CD4-positive, alpha-beta memory T cell (primary cell): ENCODE measurements at regions of chr14 and their contacts with region 1.

Region 1: DNA sequence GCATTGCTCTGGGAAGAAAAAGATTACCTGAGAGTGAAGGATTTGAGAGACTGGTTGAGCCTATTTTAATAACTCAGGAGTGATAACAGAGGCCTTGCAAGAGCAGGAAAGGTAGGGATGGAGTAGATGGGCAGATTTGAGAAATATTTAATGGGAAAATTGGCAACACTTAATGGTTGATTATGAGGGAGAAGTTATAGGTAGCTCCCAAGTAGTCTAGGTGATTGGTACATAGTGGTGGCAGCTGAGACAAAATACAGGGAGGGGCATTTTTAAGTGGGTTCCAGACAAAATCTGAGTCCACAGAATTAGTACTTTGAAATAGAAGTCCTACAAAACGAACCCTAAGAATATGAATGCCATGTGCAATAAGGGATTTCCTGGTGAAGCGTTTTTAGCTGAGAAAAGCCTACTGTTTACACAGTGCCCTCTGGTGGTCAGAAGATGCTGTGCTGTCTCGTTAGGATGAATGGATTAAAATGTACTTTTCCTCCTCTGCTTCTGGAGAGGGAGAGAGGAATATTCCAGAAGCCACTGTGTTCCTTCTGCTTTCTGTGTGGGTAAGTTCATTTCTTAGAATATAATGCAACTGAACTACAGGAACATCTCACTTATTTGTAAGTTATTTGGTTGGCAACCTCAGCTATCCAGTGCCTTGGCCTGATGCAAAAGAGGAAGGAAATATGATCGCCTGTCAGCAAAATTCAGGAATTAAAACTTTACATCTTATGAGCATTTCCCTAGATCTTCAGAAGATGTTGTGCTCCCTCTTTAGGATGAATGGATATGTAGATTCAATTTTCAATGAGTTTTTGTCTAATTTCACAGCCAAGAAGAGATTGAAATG is 6.5 kb downstream of the ZBTB1 start:
- DNase-seq: peak; percentile 65 to 72 (median 69)
- H3K4me3 ChIP-seq: no peak overlapping the region
- H3K4me3 Mint-ChIP-seq: peak overlapping the region in 7 of 8 donors; percentile 12 to 93 (median 65)
- H3K27ac ChIP-seq: peak overlapping the region; percentile 59
- H3K27ac Mint-ChIP-seq: peak overlapping the region; percentile 54 to 94 (median 88)
- H3K4me1 ChIP-seq: peaks cover 92% of the 10 kb centered on the region
- H3K4me1 Mint-ChIP-seq: peaks cover 62 to 93% (median 81%) of the 10 kb centered on the region in 4 donors
- H3K27me3 ChIP-seq: no peaks in the 10 kb centered on the region
- H3K27me3 Mint-ChIP-seq: no peaks in the 10 kb centered on the region

Region 2: DNA sequence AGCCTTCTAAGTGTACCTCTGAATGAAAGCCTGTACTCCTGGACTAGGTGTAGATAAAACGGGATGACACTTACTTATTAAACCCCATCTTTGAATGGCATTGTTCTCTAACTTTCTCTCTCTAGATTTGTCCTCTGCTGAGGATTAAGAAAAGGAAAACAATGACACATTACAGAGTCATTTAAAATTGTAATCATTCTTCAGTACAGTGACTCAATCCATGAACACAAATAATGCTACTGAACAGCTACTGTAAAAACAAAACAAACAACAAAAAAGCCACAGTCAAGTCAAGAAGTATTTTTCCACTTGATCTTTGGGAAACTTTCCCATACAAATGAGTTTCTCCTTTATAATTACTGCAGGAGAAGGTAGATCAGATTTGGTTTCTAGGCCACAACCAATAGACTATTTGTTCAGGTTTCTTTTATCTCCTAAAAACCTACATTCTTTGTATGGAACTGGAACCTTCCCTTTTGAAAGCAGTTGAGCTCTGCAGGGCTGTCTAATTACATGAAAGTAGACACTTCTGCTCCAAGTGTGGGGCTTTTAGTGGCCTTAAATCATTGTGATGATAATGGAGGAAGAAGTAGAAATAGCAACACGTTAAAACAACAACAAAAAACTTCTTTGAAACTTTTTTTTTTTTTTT is 436.0 kb before region 1 on chr14:
- CTCF ChIA-PET with region 1: no interaction called
- POLR2A ChIA-PET with region 1: no interaction called
- intact Hi-C with region 1: no loop called
- DNase-seq: no peak
- H3K4me3 ChIP-seq: no peak overlapping the region
- H3K4me3 Mint-ChIP-seq: no peak overlapping the region
- H3K27ac ChIP-seq: no peak overlapping the region
- H3K27ac Mint-ChIP-seq: peak overlapping the region in 3 of 7 donors; percentile 8 to 73 (median 58)
- H3K4me1 ChIP-seq: no peaks in the 10 kb centered on the region
- H3K4me1 Mint-ChIP-seq: no peaks in the 10 kb centered on the region
- H3K27me3 ChIP-seq: no peaks in the 10 kb centered on the region
- H3K27me3 Mint-ChIP-seq: no peaks in the 10 kb centered on the region

Region 3: GRCh38 chr14:64338616-64339316 is 172.3 kb before region 1 on chr14:
- CTCF ChIA-PET with region 1: interaction called, 11 read pairs
- POLR2A ChIA-PET with region 1: interaction called, 44 read pairs
- intact Hi-C with region 1: no loop called
- DNase-seq: peak; percentile 84 to 91 (median 85)
- H3K4me3 ChIP-seq: peak overlapping the region; percentile 36 to 77
- H3K4me3 Mint-ChIP-seq: peak overlapping the region; percentile 93 to 99 (median 95)
- H3K27ac ChIP-seq: peak overlapping the region; percentile 34
- H3K27ac Mint-ChIP-seq: peak overlapping the region; percentile 83 to 97 (median 95)
- H3K4me1 ChIP-seq: peaks cover 17% of the 10 kb centered on the region
- H3K4me1 Mint-ChIP-seq: peaks cover 12 to 27% (median 21%) of the 10 kb centered on the region in 4 donors
- H3K27me3 ChIP-seq: no peaks in the 10 kb centered on the region
- H3K27me3 Mint-ChIP-seq: no peaks in the 10 kb centered on the region

Region 4: GRCh38 chr14:64438181-64438841 is 72.7 kb before region 1 on chr14:
- CTCF ChIA-PET with region 1: interaction called, 109 read pairs
- POLR2A ChIA-PET with region 1: no interaction called
- intact Hi-C with region 1: no loop called
- DNase-seq: no peak
- H3K4me3 ChIP-seq: no peak overlapping the region
- H3K4me3 Mint-ChIP-seq: no peak overlapping the region
- H3K27ac ChIP-seq: no peak overlapping the region
- H3K27ac Mint-ChIP-seq: peak overlapping the region in 1 of 7 donors; percentile 50
- H3K4me1 ChIP-seq: no peaks in the 10 kb centered on the region
- H3K4me1 Mint-ChIP-seq: peaks cover 7 to 14% (median 12%) of the 10 kb centered on the region in 4 donors
- H3K27me3 ChIP-seq: no peaks in the 10 kb centered on the region
- H3K27me3 Mint-ChIP-seq: no peaks in the 10 kb centered on the region

Region 5: GRCh38 chr14:64465191-64465822 is 45.7 kb before region 1 on chr14 and contains the start of gene AKAP5:
- CTCF ChIA-PET with region 1: interaction called, 16 read pairs
- POLR2A ChIA-PET with region 1: interaction called, 12 read pairs
- intact Hi-C with region 1: no loop called
- DNase-seq: peak; percentile 62 to 72 (median 64)
- H3K4me3 ChIP-seq: peak within 1 kb of the TSS; percentile 38 to 57
- H3K4me3 Mint-ChIP-seq: peak within 1 kb of the TSS; percentile 82 to 95 (median 90)
- H3K27ac ChIP-seq: peak within 1 kb of the TSS; percentile 29
- H3K27ac Mint-ChIP-seq: peak within 1 kb of the TSS; percentile 71 to 89 (median 78)
- H3K4me1 ChIP-seq: peaks cover 36% of the 10 kb centered on the region
- H3K4me1 Mint-ChIP-seq: peaks cover 25 to 45% (median 33%) of the 10 kb centered on the region in 4 donors
- H3K27me3 ChIP-seq: no peaks in the 10 kb centered on the region
- H3K27me3 Mint-ChIP-seq: no peaks in the 10 kb centered on the region
- total RNA-seq, gene AKAP5: 0.14 to 0.20 TPM

Region 6: GRCh38 chr14:64491637-64492036 is 19.4 kb before region 1 on chr14:
- CTCF ChIA-PET with region 1: interaction called, 69 read pairs
- POLR2A ChIA-PET with region 1: interaction called, 318 read pairs
- intact Hi-C with region 1: loop called (anchors 2 kb)
- DNase-seq: no peak
- H3K4me3 ChIP-seq: no peak overlapping the region
- H3K4me3 Mint-ChIP-seq: peak overlapping the region in 3 of 8 donors; percentile 21 to 43 (median 21)
- H3K27ac ChIP-seq: no peak overlapping the region
- H3K27ac Mint-ChIP-seq: peak overlapping the region in 4 of 7 donors; percentile 11 to 76 (median 50)
- H3K4me1 ChIP-seq: peaks cover 47% of the 10 kb centered on the region
- H3K4me1 Mint-ChIP-seq: peaks cover 40 to 62% (median 49%) of the 10 kb centered on the region in 4 donors
- H3K27me3 ChIP-seq: no peaks in the 10 kb centered on the region
- H3K27me3 Mint-ChIP-seq: no peaks in the 10 kb centered on the region

Region 7: GRCh38 chr14:64496764-64497163 is 14.3 kb before region 1 on chr14:
- CTCF ChIA-PET with region 1: interaction called, 69 read pairs
- POLR2A ChIA-PET with region 1: interaction called, 318 read pairs
- intact Hi-C with region 1: loop called (anchors 2 kb)
- DNase-seq: no peak
- H3K4me3 ChIP-seq: no peak overlapping the region
- H3K4me3 Mint-ChIP-seq: peak overlapping the region in 6 of 8 donors; percentile 35 to 76 (median 62)
- H3K27ac ChIP-seq: no peak overlapping the region
- H3K27ac Mint-ChIP-seq: peak overlapping the region; percentile 43 to 85 (median 78)
- H3K4me1 ChIP-seq: peaks cover 81% of the 10 kb centered on the region
- H3K4me1 Mint-ChIP-seq: peaks cover 42 to 85% (median 59%) of the 10 kb centered on the region in 4 donors
- H3K27me3 ChIP-seq: no peaks in the 10 kb centered on the region
- H3K27me3 Mint-ChIP-seq: no peaks in the 10 kb centered on the region

Region 8: DNA sequence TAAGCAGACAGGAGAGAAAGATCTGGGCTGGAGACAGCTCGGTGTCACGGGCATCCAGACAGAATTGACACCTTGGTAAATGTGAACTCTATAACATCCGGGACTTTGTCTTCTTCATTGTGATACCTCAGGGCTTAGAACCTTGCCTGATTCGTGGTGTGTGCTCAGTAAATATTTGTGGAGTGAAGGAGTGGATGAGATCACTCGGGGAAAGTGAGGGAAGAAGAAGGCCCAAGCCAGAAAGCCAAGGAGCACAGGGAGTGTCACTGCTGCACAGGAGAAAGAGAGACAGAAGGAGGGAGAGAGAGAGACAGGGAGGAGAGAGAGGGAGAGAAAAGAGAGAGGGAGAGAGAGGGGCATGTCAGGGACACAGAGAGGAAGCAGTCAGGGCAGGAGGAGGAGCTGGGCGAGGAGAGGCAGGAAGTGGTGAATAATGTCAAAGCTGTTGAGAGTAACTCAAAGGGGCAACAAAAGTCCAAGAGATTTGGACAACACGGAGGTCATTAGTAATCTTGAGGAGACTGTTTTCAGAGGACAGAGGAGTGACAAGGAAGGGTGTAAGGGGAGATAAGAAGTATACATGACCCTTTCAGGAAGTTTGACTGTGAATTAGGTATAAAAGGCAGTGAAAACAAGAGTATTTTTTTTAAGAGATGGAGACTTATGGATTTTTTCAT is 732.9 kb after region 1 on chr14:
- CTCF ChIA-PET with region 1: no interaction called
- POLR2A ChIA-PET with region 1: no interaction called
- intact Hi-C with region 1: no loop called
- DNase-seq: peak in 4 of 5 donors; percentile 22 to 33 (median 25)
- H3K4me3 ChIP-seq: no peak overlapping the region
- H3K4me3 Mint-ChIP-seq: no peak overlapping the region
- H3K27ac ChIP-seq: no peak overlapping the region
- H3K27ac Mint-ChIP-seq: no peak overlapping the region
- H3K4me1 ChIP-seq: peaks cover 19% of the 10 kb centered on the region
- H3K4me1 Mint-ChIP-seq: peaks cover 7 to 14% (median 12%) of the 10 kb centered on the region in 4 donors
- H3K27me3 ChIP-seq: no peaks in the 10 kb centered on the region
- H3K27me3 Mint-ChIP-seq: no peaks in the 10 kb centered on the region